ENCODE measurements at regions of chr5 and their contacts with region 1.

Region 1: GRCh38 chr5:81513982-81514381 is 120.0 kb upstream of the ACOT12 start:
- DNase-seq: peak in 1 of 2 donors; percentile 36
- ATAC-seq: peak in 2 of 3 donors; percentile 55 to 59
- H3K4me3 ChIP-seq: no peak overlapping the region
- H3K4me3 Mint-ChIP-seq: no peak overlapping the region
- H3K27ac ChIP-seq: no peak overlapping the region
- H3K27ac Mint-ChIP-seq: no peak overlapping the region
- H3K4me1 ChIP-seq: no peaks in the 10 kb centered on the region
- H3K4me1 Mint-ChIP-seq: no peaks in the 10 kb centered on the region
- H3K27me3 ChIP-seq: no peaks in the 10 kb centered on the region
- H3K27me3 Mint-ChIP-seq: no peaks in the 10 kb centered on the region
- CTCF ChIP-seq: no peak

Region 2: GRCh38 chr5:81838307-81838906 is 324.4 kb after region 1 on chr5:
- intact Hi-C with region 1: loop called (anchors 1 kb)
- DNase-seq: peak in 1 of 2 donors; percentile 68
- ATAC-seq: peak; percentile 72 to 81 (median 76)
- H3K4me3 ChIP-seq: no peak overlapping the region
- H3K4me3 Mint-ChIP-seq: no peak overlapping the region
- H3K27ac ChIP-seq: no peak overlapping the region
- H3K27ac Mint-ChIP-seq: no peak overlapping the region
- H3K4me1 ChIP-seq: no peaks in the 10 kb centered on the region
- H3K4me1 Mint-ChIP-seq: no peaks in the 10 kb centered on the region
- H3K27me3 ChIP-seq: no peaks in the 10 kb centered on the region
- H3K27me3 Mint-ChIP-seq: peaks cover 3 to 8% of the 10 kb centered on the region in 2 donors
- CTCF ChIP-seq: peak; percentile 46

Region 3: DNA sequence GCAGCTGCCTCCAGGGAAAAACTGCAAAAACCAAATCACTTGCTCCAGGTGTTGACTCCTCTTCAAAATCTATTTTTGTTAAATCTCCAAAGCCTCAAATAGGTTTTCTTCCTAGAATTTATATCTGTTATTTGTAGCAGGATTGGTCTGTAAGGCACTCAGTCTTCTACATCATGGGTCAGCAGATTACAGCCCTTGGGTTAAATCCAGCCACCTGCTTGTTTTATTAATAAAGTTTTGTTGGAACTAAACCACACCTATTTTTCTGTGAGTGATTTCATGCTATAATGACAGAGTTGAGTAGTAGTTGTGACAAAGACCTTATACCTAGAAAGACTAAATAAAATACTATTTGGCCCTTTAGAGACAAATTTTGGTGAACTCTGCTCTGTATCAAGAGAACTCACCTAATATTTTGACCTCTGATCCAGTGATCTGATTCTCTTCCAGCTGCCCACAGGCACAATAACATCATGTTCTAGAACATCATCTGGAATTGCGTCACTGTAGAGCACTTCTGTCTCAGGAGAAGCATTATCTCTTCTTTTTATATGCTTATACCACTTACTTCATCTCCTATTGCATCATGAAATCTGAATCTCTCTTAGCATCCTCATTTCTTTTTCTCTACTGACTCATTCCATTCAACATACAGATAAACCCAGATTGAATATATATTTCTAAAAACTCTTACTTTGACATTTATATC is 634.0 kb after region 1 on chr5:
- intact Hi-C with region 1: no loop called
- DNase-seq: no peak
- ATAC-seq: no peak
- H3K4me3 ChIP-seq: no peak overlapping the region
- H3K4me3 Mint-ChIP-seq: no peak overlapping the region
- H3K27ac ChIP-seq: no peak overlapping the region
- H3K27ac Mint-ChIP-seq: no peak overlapping the region
- H3K4me1 ChIP-seq: no peaks in the 10 kb centered on the region
- H3K4me1 Mint-ChIP-seq: no peaks in the 10 kb centered on the region
- H3K27me3 ChIP-seq: no peaks in the 10 kb centered on the region
- H3K27me3 Mint-ChIP-seq: no peaks in the 10 kb centered on the region
- CTCF ChIP-seq: no peak

Measured in natural killer cell (primary cell).